Breast epithelium (tissue), 4 donors: ENCODE measurements at regions of chr13 and their contacts with region 1.

Region 1: GRCh38 chr13:32553720-32554119 is 15.1 kb upstream of the N4BP2L2 start:
- DNase-seq: no peak
- H3K4me3 ChIP-seq: no peak overlapping the region
- H3K27ac ChIP-seq: no peak overlapping the region
- H3K4me1 ChIP-seq: no peaks in the 10 kb centered on the region
- H3K27me3 ChIP-seq: no peaks in the 10 kb centered on the region
- CTCF ChIP-seq: no peak
- POLR2A ChIP-seq: no peak

Region 2: DNA sequence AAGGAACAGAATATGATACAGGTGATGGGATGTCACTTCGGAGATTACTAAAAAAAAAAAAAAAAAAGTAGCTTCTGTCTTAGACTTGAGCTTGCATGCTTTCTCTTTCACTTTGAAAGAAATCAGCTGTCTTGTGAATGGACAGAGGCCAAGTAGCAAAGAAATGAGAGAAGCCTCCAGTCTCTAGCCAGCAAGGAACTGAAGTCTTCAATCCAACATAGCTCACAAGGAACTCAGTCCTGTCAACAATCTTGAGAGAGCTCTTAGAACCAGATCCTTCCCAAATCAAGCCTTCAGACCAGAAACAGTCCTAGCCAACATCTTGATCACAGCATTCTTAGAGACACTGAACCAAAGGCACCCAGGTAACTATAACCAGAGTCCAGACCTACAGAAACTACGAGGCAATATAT is 22.9 kb before region 1 on chr13:
- intact Hi-C with region 1: no loop called
- DNase-seq: no peak
- H3K4me3 ChIP-seq: no peak overlapping the region
- H3K27ac ChIP-seq: peak overlapping the region in 1 of 2 donors; percentile 26
- H3K4me1 ChIP-seq: no peaks in the 10 kb centered on the region
- H3K27me3 ChIP-seq: no peaks in the 10 kb centered on the region
- CTCF ChIP-seq: no peak
- POLR2A ChIP-seq: no peak

Region 3: GRCh38 chr13:32577032-32577431 is 23.3 kb after region 1 on chr13:
- intact Hi-C with region 1: loop called (anchors 2 kb)
- DNase-seq: no peak
- H3K4me3 ChIP-seq: no peak overlapping the region
- H3K27ac ChIP-seq: no peak overlapping the region
- H3K4me1 ChIP-seq: no peaks in the 10 kb centered on the region
- H3K27me3 ChIP-seq: no peaks in the 10 kb centered on the region
- CTCF ChIP-seq: no peak
- POLR2A ChIP-seq: no peak

Region 4: DNA sequence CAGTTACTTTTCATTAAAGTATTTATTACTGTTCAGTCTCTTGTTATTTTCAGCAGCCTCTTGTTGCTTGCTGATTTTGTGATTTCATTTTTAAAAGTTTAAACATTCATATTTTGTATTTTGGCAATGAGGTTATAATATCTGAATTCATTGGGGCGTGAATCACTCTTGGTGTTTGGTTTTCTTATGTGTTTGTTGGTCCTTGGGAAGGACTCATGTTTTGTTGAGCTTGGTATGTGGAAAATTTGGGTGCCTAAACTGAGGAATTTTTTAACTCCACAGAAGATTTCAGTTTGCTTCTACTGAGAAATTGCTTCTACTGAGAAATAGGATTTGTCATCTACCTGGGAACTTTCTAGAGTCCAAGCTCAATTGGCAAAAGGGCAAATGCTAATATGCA is 70.7 kb after region 1 on chr13:
- intact Hi-C with region 1: no loop called
- DNase-seq: no peak
- H3K4me3 ChIP-seq: no peak overlapping the region
- H3K27ac ChIP-seq: no peak overlapping the region
- H3K4me1 ChIP-seq: no peaks in the 10 kb centered on the region
- H3K27me3 ChIP-seq: no peaks in the 10 kb centered on the region
- CTCF ChIP-seq: no peak
- POLR2A ChIP-seq: no peak

Region 5: DNA sequence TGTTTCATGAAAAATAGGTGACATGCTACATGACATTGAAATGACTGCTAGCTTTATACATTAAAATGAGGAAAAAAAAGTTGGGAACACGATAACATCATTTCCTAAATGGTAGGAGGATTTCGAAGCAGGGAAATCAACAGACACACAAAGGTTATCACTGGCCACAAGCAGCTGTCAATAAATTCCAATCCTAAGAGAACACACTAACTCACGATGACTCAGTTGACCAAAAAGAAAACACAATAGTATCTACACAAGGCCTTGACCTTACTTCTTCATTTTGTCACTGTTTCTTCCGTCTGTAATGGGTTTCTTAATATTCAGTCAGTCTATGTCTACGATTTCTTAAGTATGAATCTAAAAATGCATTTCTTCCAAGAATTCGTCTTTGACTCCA is 695.3 kb after region 1 on chr13:
- intact Hi-C with region 1: no loop called
- DNase-seq: no peak
- H3K4me3 ChIP-seq: no peak overlapping the region
- H3K27ac ChIP-seq: no peak overlapping the region
- H3K4me1 ChIP-seq: peaks cover 6 to 13% of the 10 kb centered on the region in 2 donors
- H3K27me3 ChIP-seq: no peaks in the 10 kb centered on the region
- CTCF ChIP-seq: no peak
- POLR2A ChIP-seq: no peak